Activated T-helper 2 cell treated with anti-CD3 and anti-CD28 coated beads, Interferon-gamma antibody, Interleukin-2, Interleukin-4, amounts not matched to agents 10 μg/mL and 5 μg/mL and 100 μg/mL, durations not matched to agents 14 hours and 24 hours and 36 hours (primary cell): ENCODE measurements at regions of chr7 and their contacts with region 1.

Region 1: GRCh38 chr7:143901668-143902331 is at the start of gene TCAF1:
- DNase-seq: peak; percentile 79
- H3K4me3 Mint-ChIP-seq: peak within 1 kb of the TSS; percentile 94
- H3K27ac Mint-ChIP-seq: peak within 1 kb of the TSS; percentile 78
- H3K4me1 Mint-ChIP-seq: peaks cover 23% of the 10 kb centered on the region
- H3K27me3 Mint-ChIP-seq: no peaks in the 10 kb centered on the region
- total RNA-seq, gene TCAF1: 18.4 and 22.7 TPM in 2 replicates

Region 2: GRCh38 chr7:143419880-143420279 is 481.9 kb before region 1 on chr7:
- intact Hi-C with region 1: no loop called
- DNase-seq: no peak
- H3K4me3 Mint-ChIP-seq: no peak overlapping the region
- H3K27ac Mint-ChIP-seq: no peak overlapping the region
- H3K4me1 Mint-ChIP-seq: no peaks in the 10 kb centered on the region
- H3K27me3 Mint-ChIP-seq: peaks cover 21% of the 10 kb centered on the region

Region 3: DNA sequence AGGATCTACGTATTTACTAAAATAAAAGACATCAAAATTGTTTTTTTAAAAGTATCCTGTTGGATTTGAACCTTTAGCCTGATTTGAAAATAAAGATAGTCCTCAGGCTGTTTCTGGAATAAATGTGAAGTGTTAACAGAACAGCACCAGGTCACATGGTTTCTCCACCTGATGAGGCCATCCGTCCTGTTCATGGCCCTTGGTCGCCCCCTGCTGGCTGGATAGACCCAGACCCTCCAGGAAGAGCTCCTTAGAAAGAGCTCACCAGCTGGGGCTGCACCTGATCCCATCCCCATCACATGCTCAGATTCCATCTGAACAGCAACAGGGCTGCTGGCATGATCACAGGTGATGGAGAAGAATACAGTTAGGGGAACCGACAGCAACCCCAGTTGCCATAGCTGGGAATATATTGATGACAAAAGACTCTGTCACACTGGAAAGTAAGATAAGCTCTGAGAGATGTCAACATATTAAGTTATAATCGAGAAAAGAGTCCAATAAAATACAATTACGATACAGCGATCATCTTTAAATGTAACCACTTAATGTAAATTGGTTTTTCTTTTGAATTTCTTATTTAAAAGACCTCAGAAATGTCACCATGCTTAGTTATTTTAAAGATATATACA is 226.0 kb after region 1 on chr7:
- intact Hi-C with region 1: loop called (anchors 5 kb)
- DNase-seq: peak; percentile 71
- H3K4me3 Mint-ChIP-seq: no peak overlapping the region
- H3K27ac Mint-ChIP-seq: no peak overlapping the region
- H3K4me1 Mint-ChIP-seq: no peaks in the 10 kb centered on the region
- H3K27me3 Mint-ChIP-seq: no peaks in the 10 kb centered on the region